CD14-positive monocyte (primary cell): ENCODE measurements at regions of chr15 and their contacts with region 1.

Region 1: GRCh38 chr15:40893733-40894688 is at the start of gene VPS18:
- DNase-seq: peak; percentile 97 to 98 (median 97)
- H3K4me3 ChIP-seq: peak within 1 kb of the TSS; percentile 87 to 98 (median 89)
- H3K4me3 Mint-ChIP-seq: peak within 1 kb of the TSS; percentile 97 to 98
- H3K27ac ChIP-seq: peak within 1 kb of the TSS; percentile 91 to 97
- H3K27ac Mint-ChIP-seq: peak within 1 kb of the TSS; percentile 98 to 100 (median 99)
- H3K4me1 ChIP-seq: peaks cover 24 to 35% of the 10 kb centered on the region in 2 donors
- H3K4me1 Mint-ChIP-seq: peaks cover 31% of the 10 kb centered on the region
- H3K27me3 ChIP-seq: no peaks in the 10 kb centered on the region
- H3K27me3 Mint-ChIP-seq: peaks cover 1 to 14% (median 7%) of the 10 kb centered on the region in 3 donors
- CTCF ChIP-seq: peak; percentile 91
- polyA plus RNA-seq, gene VPS18: 12.1 to 22.8 (median 21.8) TPM

Region 2: DNA sequence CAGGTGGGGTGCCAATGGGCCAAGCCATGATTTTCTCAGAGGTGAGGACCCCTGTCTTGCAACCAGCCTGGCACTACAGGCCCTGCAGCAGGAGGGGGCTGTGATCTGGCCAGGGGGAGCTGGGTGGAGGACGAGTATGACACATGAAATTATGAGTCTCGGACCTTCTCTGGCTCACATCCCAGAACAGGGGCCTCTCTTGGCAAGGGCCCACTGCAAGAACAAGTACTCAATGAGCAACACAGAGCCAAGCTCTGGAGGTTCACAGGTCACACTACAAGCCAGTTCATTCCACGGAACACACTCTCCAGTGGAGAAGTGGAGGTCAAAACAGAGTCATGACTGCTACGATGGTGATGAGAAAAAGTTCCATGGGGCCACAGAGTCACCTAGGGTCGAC is 357.5 kb before region 1 on chr15:
- intact Hi-C with region 1: no loop called
- DNase-seq: no peak
- H3K4me3 ChIP-seq: no peak overlapping the region
- H3K4me3 Mint-ChIP-seq: no peak overlapping the region
- H3K27ac ChIP-seq: no peak overlapping the region
- H3K27ac Mint-ChIP-seq: no peak overlapping the region
- H3K4me1 ChIP-seq: no peaks in the 10 kb centered on the region
- H3K4me1 Mint-ChIP-seq: peaks cover 6% of the 10 kb centered on the region
- H3K27me3 ChIP-seq: no peaks in the 10 kb centered on the region
- H3K27me3 Mint-ChIP-seq: peaks cover 0 to 2% (median 0%) of the 10 kb centered on the region in 3 donors
- CTCF ChIP-seq: no peak

Region 3: DNA sequence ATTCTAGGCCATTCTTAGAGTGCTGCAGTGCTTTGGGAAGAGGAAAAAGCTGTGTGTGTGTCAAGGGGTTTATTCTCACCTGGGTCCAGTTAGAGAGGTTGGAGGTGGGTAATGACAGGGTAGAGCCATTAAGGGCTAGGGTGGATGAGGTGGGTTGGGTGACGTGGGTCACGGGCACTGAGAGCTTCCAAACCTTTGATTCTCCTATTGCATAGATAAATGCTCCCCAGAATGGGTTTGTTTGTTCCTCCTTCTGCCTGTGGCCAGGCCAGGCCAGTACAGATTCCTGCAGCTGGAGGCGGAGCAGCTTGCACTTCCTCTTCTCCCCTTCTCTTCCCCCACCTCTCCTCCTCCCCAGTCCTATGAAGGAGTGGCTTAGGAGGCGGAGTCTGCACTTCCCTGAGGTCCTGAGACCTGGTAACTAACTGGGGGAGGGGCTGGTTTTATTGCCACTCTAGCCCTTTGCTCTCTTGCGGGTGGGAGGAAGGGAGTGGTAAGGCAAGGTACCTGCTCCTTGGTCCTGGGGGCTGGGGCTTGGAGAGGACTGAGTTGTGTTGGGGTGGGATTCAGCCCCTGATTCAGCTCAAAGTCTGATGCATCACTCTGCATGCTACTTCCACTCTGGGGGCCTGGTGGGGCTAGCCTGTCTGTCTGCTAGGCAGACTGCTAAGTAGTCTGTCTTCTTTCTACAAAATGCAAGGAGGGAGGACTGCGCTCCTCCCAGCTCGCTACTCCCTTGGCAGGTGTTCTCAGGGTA is 46.6 kb before region 1 on chr15:
- intact Hi-C with region 1: no loop called
- DNase-seq: peak; percentile 86 to 91 (median 86)
- H3K4me3 ChIP-seq: peak overlapping the region in 2 of 3 experiments; percentile 23 to 94
- H3K4me3 Mint-ChIP-seq: peak overlapping the region; percentile 70 to 99
- H3K27ac ChIP-seq: peak overlapping the region; percentile 77 to 83
- H3K27ac Mint-ChIP-seq: peak overlapping the region; percentile 83 to 96 (median 94)
- H3K4me1 ChIP-seq: peaks cover 40 to 51% of the 10 kb centered on the region in 2 donors
- H3K4me1 Mint-ChIP-seq: peaks cover 40% of the 10 kb centered on the region
- H3K27me3 ChIP-seq: peaks cover 6 to 10% of the 10 kb centered on the region in 2 donors
- H3K27me3 Mint-ChIP-seq: peaks cover 12 to 28% (median 18%) of the 10 kb centered on the region in 3 donors
- CTCF ChIP-seq: no peak

Region 4: GRCh38 chr15:40857601-40858341 is 36.2 kb before region 1 on chr15:
- intact Hi-C with region 1: loop called in 1 of 2 experiments (anchors 2 kb)
- DNase-seq: peak; percentile 60 to 68 (median 62)
- H3K4me3 ChIP-seq: peak overlapping the region in 1 of 3 experiments; percentile 19
- H3K4me3 Mint-ChIP-seq: no peak overlapping the region
- H3K27ac ChIP-seq: peak overlapping the region in 1 of 2 donors; percentile 72
- H3K27ac Mint-ChIP-seq: peak overlapping the region in 5 of 7 donors; percentile 11 to 73 (median 66)
- H3K4me1 ChIP-seq: peaks cover 35 to 49% of the 10 kb centered on the region in 2 donors
- H3K4me1 Mint-ChIP-seq: peaks cover 40% of the 10 kb centered on the region
- H3K27me3 ChIP-seq: no peaks in the 10 kb centered on the region
- H3K27me3 Mint-ChIP-seq: peaks cover 4 to 8% (median 4%) of the 10 kb centered on the region in 3 donors
- CTCF ChIP-seq: peak; percentile 88

Region 5: GRCh38 chr15:41116116-41116871 is 222.3 kb after region 1 on chr15 and contains the start of gene INO80:
- intact Hi-C with region 1: no loop called
- DNase-seq: peak; percentile 95 to 99 (median 97)
- H3K4me3 ChIP-seq: peak within 1 kb of the TSS; percentile 58 to 96 (median 96)
- H3K4me3 Mint-ChIP-seq: peak within 1 kb of the TSS; percentile 92 to 99
- H3K27ac ChIP-seq: peak within 1 kb of the TSS; percentile 87 to 96
- H3K27ac Mint-ChIP-seq: peak within 1 kb of the TSS; percentile 98 to 100 (median 99)
- H3K4me1 ChIP-seq: peaks cover 14 to 19% of the 10 kb centered on the region in 2 donors
- H3K4me1 Mint-ChIP-seq: peaks cover 23% of the 10 kb centered on the region
- H3K27me3 ChIP-seq: peaks cover 0 to 2% of the 10 kb centered on the region in 2 donors
- H3K27me3 Mint-ChIP-seq: peaks cover 0 to 3% (median 3%) of the 10 kb centered on the region in 3 donors
- CTCF ChIP-seq: no peak
- polyA plus RNA-seq, gene INO80: 2.3 to 13.1 (median 2.4) TPM